CD4-positive, alpha-beta T cell (primary cell): ENCODE measurements at regions of chr6 and their contacts with region 1.

Region 1: DNA sequence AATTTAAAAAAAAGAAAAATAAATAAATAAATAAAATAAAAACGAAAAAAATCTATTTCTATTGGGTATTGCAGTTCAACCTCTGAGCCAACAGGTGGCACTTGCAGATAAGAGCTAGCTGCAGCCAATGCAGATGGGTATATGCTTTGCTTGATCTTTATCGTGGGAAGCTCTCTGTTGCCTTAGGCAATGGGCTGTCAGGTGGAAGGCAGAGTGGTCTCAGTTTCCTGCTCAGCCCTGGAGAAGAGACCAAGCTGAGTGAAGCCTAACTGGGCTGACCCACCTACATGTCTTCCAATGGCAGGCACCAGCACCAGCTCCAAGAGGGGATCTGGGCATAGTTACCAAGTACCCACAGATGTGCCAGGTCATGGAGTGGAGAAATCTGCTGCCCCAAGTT is 95.0 kb downstream of the AK9 start:
- DNase-seq: peak in 5 of 14 experiments; percentile 7 to 45 (median 17)
- ATAC-seq: peak; percentile 82
- H3K4me3 ChIP-seq: no peak overlapping the region
- H3K4me3 Mint-ChIP-seq: no peak overlapping the region
- H3K27ac ChIP-seq: no peak overlapping the region
- H3K27ac Mint-ChIP-seq: no peak overlapping the region
- H3K4me1 ChIP-seq: no peaks in the 10 kb centered on the region
- H3K4me1 Mint-ChIP-seq: peaks cover 12% of the 10 kb centered on the region
- H3K27me3 ChIP-seq: no peaks in the 10 kb centered on the region
- H3K27me3 Mint-ChIP-seq: no peaks in the 10 kb centered on the region
- CTCF ChIP-seq: peak; percentile 45

Region 2: GRCh38 chr6:107756660-107757355 is 1839.2 kb before region 1 on chr6:
- CTCF ChIA-PET with region 1: no interaction called
- POLR2A ChIA-PET with region 1: no interaction called
- intact Hi-C with region 1: no loop called
- DNase-seq: peak in 2 of 14 experiments; percentile 26 to 54
- ATAC-seq: peak; percentile 43
- H3K4me3 ChIP-seq: no peak overlapping the region
- H3K4me3 Mint-ChIP-seq: peak overlapping the region; percentile 31
- H3K27ac ChIP-seq: peak overlapping the region in 1 of 2 donors; percentile 55
- H3K27ac Mint-ChIP-seq: peak overlapping the region; percentile 69
- H3K4me1 ChIP-seq: peaks cover 30% of the 10 kb centered on the region
- H3K4me1 Mint-ChIP-seq: peaks cover 79% of the 10 kb centered on the region
- H3K27me3 ChIP-seq: no peaks in the 10 kb centered on the region
- H3K27me3 Mint-ChIP-seq: no peaks in the 10 kb centered on the region
- CTCF ChIP-seq: no peak

Region 3: DNA sequence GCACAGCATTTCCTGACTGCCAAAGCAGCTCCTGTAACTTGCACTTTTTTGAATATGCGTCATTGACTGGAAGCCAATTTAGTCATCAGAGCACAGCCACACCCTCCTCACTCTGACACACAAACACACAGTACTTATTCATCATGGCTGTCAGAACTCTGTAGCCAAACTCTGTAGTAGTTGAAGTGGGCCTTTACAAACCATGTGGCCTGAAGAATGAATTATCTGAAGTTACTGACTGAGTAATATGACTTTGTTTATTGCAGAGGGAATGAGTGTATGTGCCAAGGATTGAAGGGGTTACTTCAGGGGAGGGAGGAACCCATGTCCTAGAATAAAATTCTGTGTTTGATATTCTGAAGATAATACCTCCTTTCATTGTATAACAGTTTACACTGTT is 197.8 kb after region 1 on chr6:
- CTCF ChIA-PET with region 1: no interaction called
- POLR2A ChIA-PET with region 1: no interaction called
- intact Hi-C with region 1: loop called in 1 of 2 experiments (anchors 10 kb)
- DNase-seq: peak in 1 of 14 experiments; percentile 17
- ATAC-seq: no peak
- H3K4me3 ChIP-seq: no peak overlapping the region
- H3K4me3 Mint-ChIP-seq: no peak overlapping the region
- H3K27ac ChIP-seq: no peak overlapping the region
- H3K27ac Mint-ChIP-seq: no peak overlapping the region
- H3K4me1 ChIP-seq: no peaks in the 10 kb centered on the region
- H3K4me1 Mint-ChIP-seq: no peaks in the 10 kb centered on the region
- H3K27me3 ChIP-seq: no peaks in the 10 kb centered on the region
- H3K27me3 Mint-ChIP-seq: no peaks in the 10 kb centered on the region
- CTCF ChIP-seq: no peak